Tibial artery (tissue), 4 donors: ENCODE measurements at regions of chr2 and their contacts with region 1.

Region 1: DNA sequence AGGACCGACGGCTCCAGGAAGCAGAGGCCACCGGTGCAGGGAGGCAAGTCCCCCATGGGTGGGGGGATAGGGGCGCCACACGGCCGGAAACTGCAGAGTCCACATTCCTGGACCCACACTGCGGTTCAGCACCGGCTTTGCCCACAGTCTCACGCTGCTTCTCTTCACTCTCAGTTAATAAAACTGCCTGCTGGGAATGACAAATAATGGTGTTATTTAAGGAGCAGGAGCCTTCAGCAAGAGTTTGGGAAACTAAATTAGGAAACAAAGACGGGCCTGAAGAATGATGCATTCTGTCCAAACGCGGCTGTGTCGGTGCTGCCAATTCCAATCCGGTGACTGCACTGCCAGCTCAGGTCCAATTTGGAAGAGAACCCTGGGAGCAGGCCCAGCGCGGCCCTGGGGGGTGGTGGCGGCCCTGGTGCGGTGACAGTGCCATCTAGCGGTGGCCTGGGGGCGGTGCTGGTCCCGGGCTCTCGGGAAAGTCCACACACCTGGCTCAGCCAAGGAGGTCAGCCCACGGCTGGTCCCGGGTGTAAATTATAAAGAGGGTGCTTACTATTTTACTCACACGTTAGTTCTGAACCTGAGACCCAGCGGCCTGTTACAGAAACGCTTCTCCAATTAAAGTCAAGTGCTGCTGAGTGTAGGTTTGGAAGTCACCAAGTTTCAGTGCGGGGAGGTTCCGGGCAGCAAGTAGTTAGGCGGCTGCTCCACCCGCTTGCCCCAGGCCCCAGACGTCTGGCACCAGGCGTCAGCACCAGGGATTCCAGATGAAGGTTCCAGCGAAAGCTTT is 73.1 kb upstream of the PXDN start:
- DNase-seq: peak; percentile 93 to 97
- H3K4me3 ChIP-seq: peak overlapping the region; percentile 13 to 30
- H3K27ac ChIP-seq: peak overlapping the region; percentile 88 to 97
- H3K4me1 ChIP-seq: peaks cover 3 to 32% (median 23%) of the 10 kb centered on the region in 4 donors
- H3K27me3 ChIP-seq: no peaks in the 10 kb centered on the region
- CTCF ChIP-seq: peak; percentile 97 to 98

Region 2: GRCh38 chr2:1591978-1592907 is 225.2 kb before region 1 on chr2:
- intact Hi-C with region 1: loop called (anchors 5 kb)
- DNase-seq: peak; percentile 82 to 94
- H3K4me3 ChIP-seq: no peak overlapping the region
- H3K27ac ChIP-seq: peak overlapping the region; percentile 18 to 47
- H3K4me1 ChIP-seq: peaks cover 0 to 13% (median 10%) of the 10 kb centered on the region in 4 donors
- H3K27me3 ChIP-seq: peaks cover 0 to 4% of the 10 kb centered on the region in 2 donors
- CTCF ChIP-seq: peak; percentile 92 to 95

Region 3: DNA sequence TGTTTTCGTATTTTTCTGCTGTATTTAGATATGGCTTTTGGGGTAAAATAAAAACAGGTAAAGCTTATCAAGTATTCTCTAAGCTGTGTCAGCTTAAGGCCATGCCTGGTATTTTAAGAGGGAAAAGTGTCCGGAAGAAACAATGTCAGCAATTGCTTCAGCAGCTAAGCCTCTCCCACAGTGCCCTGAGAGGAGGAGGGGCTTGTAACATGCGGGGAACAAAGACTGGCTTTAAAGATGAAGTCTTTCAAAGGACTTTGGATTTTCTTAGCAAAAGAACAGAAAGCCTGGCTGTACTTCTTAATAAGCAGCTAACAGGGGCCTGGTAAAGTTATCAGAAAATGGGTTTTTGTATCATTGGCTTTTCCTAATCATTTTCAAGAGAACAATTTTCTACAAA is 175.9 kb before region 1 on chr2:
- intact Hi-C with region 1: loop called (anchors 5 kb)
- DNase-seq: no peak
- H3K4me3 ChIP-seq: no peak overlapping the region
- H3K27ac ChIP-seq: no peak overlapping the region
- H3K4me1 ChIP-seq: peaks cover 0 to 17% (median 2%) of the 10 kb centered on the region in 4 donors
- H3K27me3 ChIP-seq: no peaks in the 10 kb centered on the region
- CTCF ChIP-seq: no peak

Region 4: GRCh38 chr2:2260691-2261268 is 443.3 kb after region 1 on chr2:
- intact Hi-C with region 1: no loop called
- DNase-seq: no peak
- H3K4me3 ChIP-seq: no peak overlapping the region
- H3K27ac ChIP-seq: no peak overlapping the region
- H3K4me1 ChIP-seq: no peaks in the 10 kb centered on the region
- H3K27me3 ChIP-seq: no peaks in the 10 kb centered on the region
- CTCF ChIP-seq: no peak